PC-9 (cell line): ENCODE measurements at regions of chr11 and their contacts with region 1.

Region 1: GRCh38 chr11:73206801-73207200 is 11.3 kb upstream of the P2RY2 start:
- DNase-seq: peak in 1 of 2 experiments; percentile 92
- H3K4me3 ChIP-seq: no peak overlapping the region
- H3K27ac ChIP-seq: peak overlapping the region; percentile 73
- H3K4me1 ChIP-seq: peaks cover 56% of the 10 kb centered on the region
- H3K27me3 ChIP-seq: no peaks in the 10 kb centered on the region
- CTCF ChIP-seq: no peak

Region 2: DNA sequence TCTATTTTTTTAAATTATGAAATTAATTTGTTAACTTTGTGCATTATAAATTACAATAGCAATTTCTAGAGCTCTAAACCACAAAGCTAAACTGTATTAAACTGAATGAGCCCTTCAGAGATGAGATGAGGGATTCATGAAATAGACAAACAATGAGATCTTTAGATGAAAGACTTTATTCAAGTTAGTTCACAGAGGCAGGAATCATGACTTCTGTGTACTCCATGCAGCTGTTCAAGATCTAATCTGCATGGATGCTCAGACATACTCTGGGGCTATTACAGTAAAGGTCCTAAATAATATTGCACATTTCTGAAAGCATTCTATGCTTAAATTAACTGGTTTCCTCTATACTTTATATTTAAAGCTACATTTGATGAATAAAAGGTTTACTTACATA is 187.4 kb before region 1 on chr11:
- CTCF ChIA-PET with region 1: no interaction called
- POLR2A ChIA-PET with region 1: no interaction called
- intact Hi-C with region 1: no loop called
- DNase-seq: no peak
- H3K4me3 ChIP-seq: no peak overlapping the region
- H3K27ac ChIP-seq: no peak overlapping the region
- H3K4me1 ChIP-seq: no peaks in the 10 kb centered on the region
- H3K27me3 ChIP-seq: no peaks in the 10 kb centered on the region
- CTCF ChIP-seq: no peak

Region 3: GRCh38 chr11:73227588-73228211 is 20.9 kb after region 1 on chr11:
- CTCF ChIA-PET with region 1: no interaction called
- POLR2A ChIA-PET with region 1: interaction called, 12 read pairs
- intact Hi-C with region 1: no loop called
- DNase-seq: peak; percentile 90 to 97
- H3K4me3 ChIP-seq: 0 out of 2 replicates have a peak overlapping the region, but pooled peaks have one; percentile 2
- H3K27ac ChIP-seq: peak overlapping the region; percentile 50
- H3K4me1 ChIP-seq: peaks cover 49% of the 10 kb centered on the region
- H3K27me3 ChIP-seq: no peaks in the 10 kb centered on the region
- CTCF ChIP-seq: peak; percentile 69

Region 4: GRCh38 chr11:73570415-73571114 is 363.8 kb after region 1 on chr11:
- CTCF ChIA-PET with region 1: no interaction called
- POLR2A ChIA-PET with region 1: no interaction called
- intact Hi-C with region 1: no loop called
- DNase-seq: peak; percentile 51 to 62
- H3K4me3 ChIP-seq: no peak overlapping the region
- H3K27ac ChIP-seq: peak overlapping the region; percentile 11; the same call in 1 of the 2 replicates
- H3K4me1 ChIP-seq: no peaks in the 10 kb centered on the region
- H3K27me3 ChIP-seq: no peaks in the 10 kb centered on the region
- CTCF ChIP-seq: no peak